Sciatic nerve (tissue), 2 donors: ENCODE measurements at regions of chr13 and their contacts with region 1.

Region 1: DNA sequence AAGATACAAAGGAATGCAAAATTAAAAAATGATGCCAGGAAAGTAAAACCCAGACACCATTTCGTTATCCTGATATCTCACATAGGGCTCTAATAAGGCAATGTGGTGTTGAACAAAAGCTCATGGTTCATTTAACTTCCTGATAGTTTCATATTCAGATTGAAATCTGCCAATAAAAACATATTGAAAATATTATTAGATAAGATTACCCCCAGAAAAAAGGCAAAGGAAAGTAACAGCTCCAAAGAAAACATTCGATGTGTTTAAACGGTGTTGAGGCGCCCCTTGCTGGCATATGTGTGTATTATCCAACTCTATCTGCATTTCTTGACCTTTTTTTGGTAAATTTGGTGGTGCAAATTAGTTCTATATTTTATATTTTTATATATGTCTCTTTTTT is 75.9 kb downstream of the ESD start:
- DNase-seq: peak; percentile 66
- ATAC-seq: peak; percentile 78

Region 2: GRCh38 chr13:46492946-46493345 is 228.1 kb before region 1 on chr13:
- intact Hi-C with region 1: loop called (anchors 5 kb)
- DNase-seq: no peak
- ATAC-seq: peak; percentile 42